Panc1 (cell line): ENCODE measurements at regions of chr4 and their contacts with region 1.

Region 1: DNA sequence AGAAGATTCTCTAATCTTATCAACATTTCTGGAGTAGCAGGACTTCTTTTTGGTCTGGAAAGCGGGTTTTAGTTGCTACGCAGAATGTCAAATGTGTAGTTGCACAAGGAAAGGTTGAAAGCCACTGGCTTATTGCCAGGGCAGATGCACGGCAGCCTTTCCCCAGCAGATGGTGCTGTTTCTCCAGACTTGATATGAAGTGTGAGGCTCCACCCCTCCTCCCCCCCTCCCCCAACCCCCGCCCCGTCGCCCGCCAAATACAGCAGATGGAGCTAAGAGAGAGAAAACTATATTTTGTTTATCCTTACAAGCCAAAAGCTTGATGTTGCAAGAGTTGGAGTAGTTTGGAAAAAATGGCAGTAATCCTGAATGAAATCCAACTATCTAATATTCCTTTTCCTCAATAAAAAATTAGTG is 32.0 kb downstream of the ENOPH1 start:
- DNase-seq: peak; percentile 59
- ATAC-seq: peak; percentile 85
- H3K4me3 ChIP-seq: no peak overlapping the region
- H3K27ac ChIP-seq: no peak overlapping the region
- H3K4me1 ChIP-seq: no peaks in the 10 kb centered on the region
- H3K27me3 ChIP-seq: no peaks in the 10 kb centered on the region
- CTCF ChIP-seq: peak; percentile 81

Region 2: DNA sequence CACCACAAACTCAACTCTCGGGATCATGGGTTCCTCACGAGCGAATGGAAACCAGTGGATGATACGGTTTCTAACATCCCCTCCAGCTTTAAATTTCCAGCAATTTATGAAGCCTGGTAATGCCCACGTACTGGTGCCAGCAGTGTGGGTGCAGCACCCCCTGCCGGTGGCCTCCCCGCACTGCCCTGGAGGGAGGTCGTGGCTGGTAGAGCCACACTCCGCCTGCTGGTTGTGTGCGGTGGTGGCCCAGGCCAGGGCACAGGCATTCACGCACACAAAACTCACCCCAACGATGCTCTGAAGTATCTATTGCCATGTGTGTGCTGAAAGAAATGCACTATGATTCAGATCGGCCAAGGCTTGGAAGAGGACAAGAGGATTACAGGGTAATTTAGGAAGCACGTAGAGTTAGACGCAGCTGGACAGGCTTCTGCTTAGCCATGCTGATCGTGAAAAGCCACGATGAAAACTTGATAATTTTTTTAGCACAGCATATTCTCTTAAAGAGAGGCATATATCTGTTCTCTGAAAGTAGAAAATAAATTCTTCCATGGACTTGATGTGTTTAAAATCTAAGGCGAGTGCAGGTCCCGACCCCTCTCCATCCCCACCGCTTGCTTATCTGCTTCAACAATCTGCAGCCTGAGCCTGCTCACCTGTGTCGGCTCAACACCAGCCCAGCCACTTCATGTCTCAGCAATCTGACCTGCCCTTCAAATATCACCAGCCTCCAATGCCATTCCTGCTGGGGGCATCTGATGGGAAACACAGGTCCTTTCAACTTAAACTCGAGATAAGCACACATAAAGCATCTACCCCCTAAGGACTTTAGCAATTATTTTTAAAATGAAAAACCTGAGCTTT is 277.1 kb after region 1 on chr4:
- CTCF ChIA-PET with region 1: interaction called, 13 read pairs
- POLR2A ChIA-PET with region 1: no interaction called
- in situ Hi-C with region 1: no loop called
- intact Hi-C with region 1: loop called (anchors 1 kb)
- DNase-seq: peak; percentile 12
- ATAC-seq: peak; percentile 99
- H3K4me3 ChIP-seq: no peak overlapping the region
- H3K27ac ChIP-seq: no peak overlapping the region
- H3K4me1 ChIP-seq: no peaks in the 10 kb centered on the region
- H3K27me3 ChIP-seq: no peaks in the 10 kb centered on the region
- CTCF ChIP-seq: peak; percentile 90

Region 3: GRCh38 chr4:82801910-82802521 is 339.6 kb after region 1 on chr4:
- CTCF ChIA-PET with region 1: no interaction called
- POLR2A ChIA-PET with region 1: no interaction called
- in situ Hi-C with region 1: no loop called
- intact Hi-C with region 1: loop called (anchors 5 kb)
- DNase-seq: no peak
- ATAC-seq: 0 out of 2 replicates have a peak, but pooled peaks have one; percentile 47
- H3K4me3 ChIP-seq: no peak overlapping the region
- H3K27ac ChIP-seq: no peak overlapping the region
- H3K4me1 ChIP-seq: no peaks in the 10 kb centered on the region
- H3K27me3 ChIP-seq: no peaks in the 10 kb centered on the region; the same call in 1 of the 2 replicates
- CTCF ChIP-seq: peak; percentile 66; the same call in 1 of the 2 replicates